B cell (primary cell): ENCODE measurements at regions of chrX and their contacts with region 1.

Region 1: DNA sequence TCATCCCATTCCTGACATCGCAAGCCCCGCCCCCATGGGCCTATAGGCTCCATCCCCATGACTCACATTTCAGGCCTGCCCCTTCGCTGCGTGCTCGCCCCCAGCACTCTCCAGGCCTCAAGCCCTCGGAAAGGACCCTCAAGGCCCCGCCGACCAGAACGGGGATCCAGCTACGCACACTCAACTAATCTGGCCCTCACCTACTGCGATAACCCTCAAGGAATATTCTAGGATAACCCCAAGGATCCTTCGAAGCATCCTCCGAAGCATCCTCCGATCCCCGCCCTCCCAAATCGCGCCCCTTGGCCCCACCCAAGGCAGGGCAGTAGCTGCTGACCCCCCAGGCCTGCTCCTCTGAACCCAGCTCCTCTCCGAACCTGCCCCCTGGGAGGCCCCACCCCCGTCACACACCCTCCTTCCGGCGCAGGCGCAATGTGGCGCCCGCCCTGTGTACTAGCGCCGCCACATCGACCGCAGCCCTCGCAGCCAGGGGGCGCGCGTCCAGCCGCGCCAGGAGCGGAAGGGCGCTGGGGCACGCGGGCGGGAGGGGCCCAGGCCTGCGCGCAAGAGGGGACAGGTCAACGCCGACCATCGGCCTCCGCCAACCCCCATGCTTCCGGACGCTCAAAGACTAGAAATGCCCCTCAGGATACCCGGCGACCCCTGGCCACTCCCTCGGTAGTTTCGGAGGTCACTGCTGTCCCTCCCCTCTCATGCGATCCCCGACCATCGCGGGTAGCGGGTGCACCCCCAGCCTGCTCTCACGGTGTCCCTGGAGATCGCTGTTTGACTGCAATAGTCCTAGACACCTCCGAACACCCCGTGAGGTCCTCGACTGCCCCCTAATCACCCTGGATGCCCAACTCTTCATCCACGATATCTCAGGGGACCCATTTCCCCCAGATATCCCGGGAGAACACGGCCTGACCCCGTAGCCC is 6.4 kb upstream of the MAGIX start:
- DNase-seq: peak; percentile 89
- ATAC-seq: peak; percentile 95
- H3K4me3 ChIP-seq: peak overlapping the region in 4 of 5 experiments; percentile 59 to 79 (median 64)
- H3K4me3 Mint-ChIP-seq: peak overlapping the region; percentile 96
- H3K27ac ChIP-seq: peak overlapping the region; percentile 87 to 93
- H3K27ac Mint-ChIP-seq: peak overlapping the region; percentile 99
- H3K4me1 ChIP-seq: peaks cover 8 to 14% of the 10 kb centered on the region in 2 donors
- H3K4me1 Mint-ChIP-seq: peaks cover 15% of the 10 kb centered on the region
- H3K27me3 ChIP-seq: no peaks in the 10 kb centered on the region
- H3K27me3 Mint-ChIP-seq: no peaks in the 10 kb centered on the region
- CTCF ChIP-seq: peak; percentile 66

Region 2: GRCh38 chrX:49172280-49172780 is 16.2 kb after region 1 on chrX:
- CTCF ChIA-PET with region 1: interaction called, 13 read pairs
- POLR2A ChIA-PET with region 1: interaction called, 12 read pairs
- intact Hi-C with region 1: loop called (anchors 2 kb)
- DNase-seq: peak; percentile 81
- ATAC-seq: peak; percentile 75
- H3K4me3 ChIP-seq: peak overlapping the region; percentile 53 to 74 (median 71)
- H3K4me3 Mint-ChIP-seq: peak overlapping the region; percentile 90
- H3K27ac ChIP-seq: peak overlapping the region; percentile 74 to 84
- H3K27ac Mint-ChIP-seq: peak overlapping the region; percentile 92
- H3K4me1 ChIP-seq: peaks cover 15 to 45% of the 10 kb centered on the region in 2 donors
- H3K4me1 Mint-ChIP-seq: peaks cover 44% of the 10 kb centered on the region
- H3K27me3 ChIP-seq: no peaks in the 10 kb centered on the region
- H3K27me3 Mint-ChIP-seq: no peaks in the 10 kb centered on the region
- CTCF ChIP-seq: no peak

Region 3: DNA sequence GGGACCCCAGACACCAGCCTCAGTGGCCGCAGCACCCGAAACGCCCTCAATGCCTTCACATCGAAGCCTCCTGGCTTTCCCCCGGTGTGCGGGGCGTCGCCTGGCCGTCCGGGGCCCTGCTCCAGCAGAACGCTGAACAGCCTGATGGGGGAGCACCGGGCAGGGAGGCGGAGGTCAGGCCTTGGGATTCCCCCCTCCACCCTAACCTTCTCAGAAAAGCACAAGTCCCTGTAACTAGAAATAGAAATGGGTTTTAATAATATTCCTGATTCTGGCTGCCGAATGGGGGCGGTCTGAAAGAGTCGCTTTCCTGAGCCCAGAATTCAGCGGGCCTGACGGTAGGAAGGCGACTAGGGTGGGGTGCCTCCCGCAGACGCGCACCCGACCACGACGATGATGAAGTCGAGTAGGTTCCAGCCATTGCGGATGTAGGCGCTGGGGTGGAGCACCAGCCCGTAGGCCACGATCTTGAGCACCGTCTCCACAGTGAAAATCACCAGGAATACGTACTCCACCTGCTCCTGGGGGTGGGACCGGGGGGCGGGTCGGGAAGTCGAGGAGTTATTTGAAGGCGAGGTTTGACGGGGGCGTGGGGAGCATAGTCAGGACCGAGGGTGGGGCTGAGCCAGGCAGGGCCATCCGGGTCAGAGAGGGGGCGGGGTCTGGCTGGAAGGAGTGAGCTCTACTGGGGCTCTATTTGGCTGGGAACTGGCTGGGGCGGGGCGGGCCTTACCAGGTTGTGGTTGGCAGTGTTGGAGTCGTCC is 74.5 kb after region 1 on chrX:
- CTCF ChIA-PET with region 1: no interaction called
- POLR2A ChIA-PET with region 1: no interaction called
- intact Hi-C with region 1: loop called (anchors 2 kb)
- DNase-seq: peak; percentile 77
- ATAC-seq: peak; percentile 75
- H3K4me3 ChIP-seq: peak overlapping the region in 4 of 5 experiments; percentile 54 to 64 (median 60)
- H3K4me3 Mint-ChIP-seq: peak overlapping the region; percentile 89
- H3K27ac ChIP-seq: peak overlapping the region; percentile 87 to 88
- H3K27ac Mint-ChIP-seq: peak overlapping the region; percentile 97
- H3K4me1 ChIP-seq: peaks cover 5 to 21% of the 10 kb centered on the region in 2 donors
- H3K4me1 Mint-ChIP-seq: peaks cover 18% of the 10 kb centered on the region
- H3K27me3 ChIP-seq: no peaks in the 10 kb centered on the region
- H3K27me3 Mint-ChIP-seq: no peaks in the 10 kb centered on the region
- CTCF ChIP-seq: peak; percentile 36